Ascending aorta (tissue), 2 donors: ENCODE measurements at regions of chr2 and their contacts with region 1.

Region 1: DNA sequence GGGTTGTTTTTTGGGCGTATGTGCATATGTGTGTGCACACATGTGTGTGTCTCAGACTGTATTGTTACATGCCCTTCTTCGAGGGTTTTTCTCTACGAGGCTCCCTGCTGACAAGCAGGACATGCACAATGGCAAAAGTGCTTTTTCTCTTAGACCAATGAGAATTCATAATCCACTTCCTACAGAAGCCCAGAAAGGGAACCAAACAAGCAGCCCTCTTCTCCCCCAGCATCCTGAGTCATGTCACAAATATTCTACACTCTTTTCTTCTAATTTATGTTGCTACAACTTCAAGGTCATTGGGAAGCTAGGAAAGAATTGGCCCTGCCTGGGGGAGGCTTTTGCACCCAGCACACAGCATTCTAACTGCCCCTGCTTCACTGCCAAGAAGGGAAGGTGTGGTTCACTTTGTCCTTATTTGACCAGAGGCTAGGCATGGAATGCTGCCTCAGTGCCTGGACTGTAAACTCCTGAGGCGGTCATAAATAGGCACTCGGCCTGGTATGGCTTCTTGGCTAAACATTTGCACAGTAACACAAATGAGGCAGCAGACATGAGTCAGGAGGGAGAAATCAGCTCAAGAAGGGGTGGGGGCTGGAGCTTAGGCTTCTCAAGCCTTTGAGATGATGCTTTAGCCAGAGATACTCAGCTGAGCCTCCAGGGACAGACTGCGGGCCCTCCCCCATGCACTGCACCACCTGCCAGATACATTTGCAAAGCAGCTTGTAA is 92.7 kb upstream of the KLF7 start:
- DNase-seq: peak; percentile 69 to 94
- H3K4me3 ChIP-seq: no peak overlapping the region
- H3K27ac ChIP-seq: peak overlapping the region; percentile 66 to 75
- H3K4me1 ChIP-seq: peaks cover 4 to 19% of the 10 kb centered on the region in 2 donors
- H3K27me3 ChIP-seq: no peaks in the 10 kb centered on the region
- CTCF ChIP-seq: no peak

Region 2: DNA sequence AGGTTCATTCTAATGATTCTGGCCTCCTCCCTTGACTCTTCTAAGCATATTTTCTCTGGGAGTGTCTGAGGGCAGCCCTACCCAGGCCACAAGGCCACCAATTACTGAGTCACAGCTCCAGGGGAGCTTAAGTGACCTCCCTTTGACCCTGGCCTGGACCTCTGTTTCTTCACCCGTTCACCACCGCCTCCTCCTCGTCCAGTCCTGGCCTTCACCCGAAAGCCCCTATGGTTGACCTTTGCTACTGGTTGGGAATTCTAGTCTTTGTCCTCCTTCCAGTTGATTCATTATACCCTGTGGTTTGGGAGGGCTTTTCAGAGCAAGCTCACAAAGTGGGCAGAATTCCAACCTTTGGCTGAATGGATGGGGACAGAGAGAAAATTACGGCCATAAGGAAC is 1503.5 kb before region 1 on chr2:
- intact Hi-C with region 1: loop called (anchors 10 kb)
- DNase-seq: no peak
- H3K4me3 ChIP-seq: no peak overlapping the region
- H3K27ac ChIP-seq: peak overlapping the region; percentile 78 to 88
- H3K4me1 ChIP-seq: peaks cover 12 to 29% of the 10 kb centered on the region in 2 donors
- H3K27me3 ChIP-seq: no peaks in the 10 kb centered on the region
- CTCF ChIP-seq: no peak

Region 3: GRCh38 chr2:206968134-206969086 is 290.0 kb before region 1 on chr2:
- intact Hi-C with region 1: loop called (anchors 2 kb)
- DNase-seq: peak in 1 of 2 donors; percentile 80
- H3K4me3 ChIP-seq: peak overlapping the region in 1 of 2 donors; percentile 28
- H3K27ac ChIP-seq: peak overlapping the region; percentile 75 to 78
- H3K4me1 ChIP-seq: peaks cover 4 to 21% of the 10 kb centered on the region in 2 donors
- H3K27me3 ChIP-seq: no peaks in the 10 kb centered on the region
- CTCF ChIP-seq: no peak

Region 4: GRCh38 chr2:206981739-206982340 is 276.6 kb before region 1 on chr2:
- intact Hi-C with region 1: loop called (anchors 5 kb)
- DNase-seq: peak; percentile 29 to 88
- H3K4me3 ChIP-seq: no peak overlapping the region
- H3K27ac ChIP-seq: no peak overlapping the region
- H3K4me1 ChIP-seq: peaks cover 0 to 13% of the 10 kb centered on the region in 2 donors
- H3K27me3 ChIP-seq: no peaks in the 10 kb centered on the region
- CTCF ChIP-seq: peak; percentile 74 to 88 (median 80)

Region 5: GRCh38 chr2:207041786-207042554 is 216.5 kb before region 1 on chr2:
- intact Hi-C with region 1: loop called (anchors 5 kb)
- DNase-seq: no peak
- H3K4me3 ChIP-seq: peak overlapping the region in 1 of 2 donors; percentile 54
- H3K27ac ChIP-seq: peak overlapping the region; percentile 61 to 71
- H3K4me1 ChIP-seq: peaks cover 0 to 23% of the 10 kb centered on the region in 2 donors
- H3K27me3 ChIP-seq: no peaks in the 10 kb centered on the region
- CTCF ChIP-seq: no peak

Region 6: GRCh38 chr2:207238831-207239701 is 19.4 kb before region 1 on chr2:
- intact Hi-C with region 1: loop called (anchors 1 kb)
- DNase-seq: peak; percentile 70 to 92
- H3K4me3 ChIP-seq: no peak overlapping the region
- H3K27ac ChIP-seq: peak overlapping the region; percentile 78 to 84
- H3K4me1 ChIP-seq: peaks cover 12 to 21% of the 10 kb centered on the region in 2 donors
- H3K27me3 ChIP-seq: no peaks in the 10 kb centered on the region
- CTCF ChIP-seq: no peak

Region 7: GRCh38 chr2:207334624-207335371 is 76.4 kb after region 1 on chr2:
- intact Hi-C with region 1: loop called (anchors 2 kb)
- DNase-seq: peak; percentile 14 to 89
- H3K4me3 ChIP-seq: peak overlapping the region; percentile 32 to 50
- H3K27ac ChIP-seq: peak overlapping the region; percentile 80 to 83
- H3K4me1 ChIP-seq: peaks cover 0 to 5% of the 10 kb centered on the region in 2 donors
- H3K27me3 ChIP-seq: no peaks in the 10 kb centered on the region
- CTCF ChIP-seq: no peak